ENCODE measurements at regions of chr6 and their contacts with region 1.

Region 1: DNA sequence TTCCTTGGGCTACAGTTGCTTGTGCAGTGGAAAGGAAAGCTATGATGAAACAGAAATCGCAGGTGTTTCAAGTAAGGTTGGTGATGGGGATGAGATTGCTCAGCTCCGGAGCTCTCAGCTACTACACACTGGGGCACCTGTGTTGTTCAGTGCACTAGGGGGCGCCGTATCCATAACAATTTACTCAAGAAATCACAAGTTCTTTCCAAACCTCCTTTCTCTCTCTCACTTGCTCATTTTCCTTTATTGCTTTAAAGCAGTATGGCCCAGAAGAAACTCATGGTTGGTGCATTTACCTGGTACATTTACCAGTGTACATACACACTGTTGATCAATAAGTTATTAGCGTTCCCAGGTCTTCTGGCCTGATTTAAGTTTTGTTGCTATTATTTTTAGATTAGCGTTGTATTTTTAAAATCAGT is 235.2 kb upstream of the TAB2 start:
- DNase-seq: peak; percentile 75 to 87 (median 85)
- H3K4me3 ChIP-seq: no peak overlapping the region
- H3K27ac ChIP-seq: no peak overlapping the region
- H3K4me1 ChIP-seq: peaks cover 12% of the 10 kb centered on the region
- H3K27me3 ChIP-seq: no peaks in the 10 kb centered on the region
- CTCF ChIP-seq: peak; percentile 17 to 68 (median 68)
- EP300 ChIP-seq: no peak
- POLR2A ChIP-seq: no peak

Region 2: GRCh38 chr6:149316798-149317655 is 234.7 kb after region 1 on chr6:
- intact Hi-C with region 1: loop called in 1 of 4 experiments (anchors 10 kb)
- DNase-seq: peak; percentile 90 to 94 (median 92)
- H3K4me3 ChIP-seq: peak overlapping the region; percentile 94
- H3K27ac ChIP-seq: peak overlapping the region; percentile 84 to 99
- H3K4me1 ChIP-seq: peaks cover 3% of the 10 kb centered on the region
- H3K27me3 ChIP-seq: no peaks in the 10 kb centered on the region
- CTCF ChIP-seq: peak in 1 of 3 donors; percentile 32
- EP300 ChIP-seq: no peak
- POLR2A ChIP-seq: peak; percentile 82

Region 3: DNA sequence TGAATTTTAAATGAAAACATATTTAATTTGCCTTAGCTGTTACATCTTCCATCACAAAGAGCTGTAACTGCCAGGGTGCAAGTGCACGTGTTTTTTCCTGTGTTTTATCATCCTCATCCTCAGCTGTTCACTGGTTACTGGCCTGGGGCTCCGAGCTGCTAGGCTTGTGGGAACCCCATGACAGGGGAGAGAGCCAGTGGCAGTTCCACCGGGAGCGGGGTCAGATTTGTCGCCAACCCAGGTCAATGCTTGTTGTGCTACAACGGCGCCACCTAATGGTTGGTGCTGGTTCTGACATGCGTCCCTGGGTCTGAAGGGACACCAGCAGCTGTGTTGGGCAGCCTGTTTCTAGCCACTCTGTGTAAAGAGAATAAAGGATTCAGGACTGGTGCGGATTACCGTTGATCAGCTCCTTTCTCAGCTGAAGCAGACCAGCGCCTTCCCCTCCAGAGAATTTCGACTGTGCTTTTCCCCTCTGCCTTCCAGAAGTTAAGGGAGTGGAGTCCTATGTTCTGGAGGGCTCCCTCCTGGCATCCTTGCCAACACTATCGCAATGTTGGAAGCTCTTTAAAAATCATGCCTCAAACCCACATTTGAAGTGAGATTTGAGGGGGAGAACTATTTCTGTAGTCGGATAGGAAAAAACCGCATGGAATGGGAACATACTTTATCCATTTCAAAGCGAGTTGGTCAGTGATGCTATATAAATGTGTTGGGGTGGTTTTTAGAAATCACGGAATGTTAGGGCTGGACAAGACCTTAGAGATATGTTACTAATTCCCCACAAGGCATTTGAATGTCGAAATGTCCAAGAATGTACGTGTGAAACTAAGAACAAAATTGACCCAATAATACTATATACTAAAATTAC is 349.8 kb after region 1 on chr6:
- intact Hi-C with region 1: loop called (anchors 5 to 10 kb)
- DNase-seq: peak; percentile 82 to 91 (median 90)
- H3K4me3 ChIP-seq: no peak overlapping the region
- H3K27ac ChIP-seq: no peak overlapping the region
- H3K4me1 ChIP-seq: peaks cover 2% of the 10 kb centered on the region
- H3K27me3 ChIP-seq: no peaks in the 10 kb centered on the region
- CTCF ChIP-seq: peak; percentile 85 to 92 (median 89)
- EP300 ChIP-seq: no peak
- POLR2A ChIP-seq: no peak

Region 4: DNA sequence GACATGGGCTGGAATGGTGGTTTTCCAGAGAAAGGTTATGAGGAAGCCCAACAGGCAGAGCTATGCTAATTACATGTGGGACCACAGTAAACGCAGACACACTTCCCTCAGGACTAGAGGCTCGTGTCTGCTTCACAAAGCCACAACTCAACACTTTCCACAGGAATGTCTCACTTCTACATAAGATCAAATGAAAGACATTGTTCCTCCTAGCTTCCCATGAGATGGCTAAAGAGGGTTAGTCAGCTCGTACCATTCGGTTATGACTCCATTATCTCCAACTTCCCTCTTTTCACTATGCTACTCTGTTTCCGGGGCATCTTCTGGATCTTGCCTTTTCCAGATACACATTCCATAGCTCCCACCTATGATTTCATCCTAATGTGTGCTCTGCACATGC is 431.6 kb after region 1 on chr6:
- intact Hi-C with region 1: loop called in 1 of 4 experiments (anchors 10 kb)
- DNase-seq: no peak
- H3K4me3 ChIP-seq: no peak overlapping the region
- H3K27ac ChIP-seq: no peak overlapping the region
- H3K4me1 ChIP-seq: no peaks in the 10 kb centered on the region
- H3K27me3 ChIP-seq: no peaks in the 10 kb centered on the region
- CTCF ChIP-seq: no peak
- EP300 ChIP-seq: no peak
- POLR2A ChIP-seq: no peak

Measured in ovary (tissue), 10 donors.